Activated CD8-positive, alpha-beta T cell treated with anti-CD3 and anti-CD28 coated beads for 36 hours (primary cell): ENCODE measurements at regions of chr3 and their contacts with region 1.

Region 1: GRCh38 chr3:4517643-4518311 is 24.6 kb downstream of the ITPR1 start:
- DNase-seq: no peak
- ATAC-seq: no peak
- H3K4me3 Mint-ChIP-seq: no peak overlapping the region
- H3K27ac Mint-ChIP-seq: peak overlapping the region; percentile 55
- H3K4me1 Mint-ChIP-seq: peaks cover 50% of the 10 kb centered on the region
- H3K27me3 Mint-ChIP-seq: no peaks in the 10 kb centered on the region
- CTCF ChIP-seq: no peak

Region 2: DNA sequence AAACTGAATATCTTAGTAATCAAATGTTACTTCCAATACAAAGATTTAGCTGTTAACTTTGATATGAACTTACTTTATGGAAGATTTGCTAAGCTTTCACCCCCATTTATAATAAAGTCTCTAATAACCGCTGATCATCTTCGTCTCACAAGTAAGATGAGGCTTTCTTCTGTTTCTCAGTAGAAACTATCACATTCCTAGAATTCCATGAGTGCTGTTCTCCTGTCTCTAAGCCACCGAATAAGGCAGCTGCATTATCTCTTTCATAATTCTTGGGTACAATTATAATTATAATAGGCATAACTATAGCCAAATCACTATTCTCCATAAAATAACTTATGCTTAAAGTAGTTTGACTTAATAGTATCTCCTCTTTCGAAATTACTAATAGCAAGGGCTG is 232.9 kb before region 1 on chr3:
- CTCF ChIA-PET with region 1: no interaction called
- POLR2A ChIA-PET with region 1: no interaction called
- intact Hi-C with region 1: no loop called
- DNase-seq: no peak
- ATAC-seq: no peak
- H3K4me3 Mint-ChIP-seq: no peak overlapping the region
- H3K27ac Mint-ChIP-seq: no peak overlapping the region
- H3K4me1 Mint-ChIP-seq: no peaks in the 10 kb centered on the region
- H3K27me3 Mint-ChIP-seq: no peaks in the 10 kb centered on the region
- CTCF ChIP-seq: no peak

Region 3: GRCh38 chr3:4387210-4388204 is 130.3 kb before region 1 on chr3:
- CTCF ChIA-PET with region 1: no interaction called
- POLR2A ChIA-PET with region 1: no interaction called
- intact Hi-C with region 1: no loop called
- DNase-seq: no peak
- ATAC-seq: peak; percentile 87
- H3K4me3 Mint-ChIP-seq: no peak overlapping the region
- H3K27ac Mint-ChIP-seq: peak overlapping the region; percentile 66
- H3K4me1 Mint-ChIP-seq: peaks cover 35% of the 10 kb centered on the region
- H3K27me3 Mint-ChIP-seq: no peaks in the 10 kb centered on the region
- CTCF ChIP-seq: no peak

Region 4: GRCh38 chr3:4474683-4475490 is 42.9 kb before region 1 on chr3:
- CTCF ChIA-PET with region 1: no interaction called
- POLR2A ChIA-PET with region 1: no interaction called
- intact Hi-C with region 1: no loop called
- DNase-seq: peak; percentile 70
- ATAC-seq: peak; percentile 88
- H3K4me3 Mint-ChIP-seq: peak overlapping the region; percentile 7
- H3K27ac Mint-ChIP-seq: peak overlapping the region; percentile 44
- H3K4me1 Mint-ChIP-seq: peaks cover 10% of the 10 kb centered on the region
- H3K27me3 Mint-ChIP-seq: peaks cover 28% of the 10 kb centered on the region
- CTCF ChIP-seq: no peak

Region 5: DNA sequence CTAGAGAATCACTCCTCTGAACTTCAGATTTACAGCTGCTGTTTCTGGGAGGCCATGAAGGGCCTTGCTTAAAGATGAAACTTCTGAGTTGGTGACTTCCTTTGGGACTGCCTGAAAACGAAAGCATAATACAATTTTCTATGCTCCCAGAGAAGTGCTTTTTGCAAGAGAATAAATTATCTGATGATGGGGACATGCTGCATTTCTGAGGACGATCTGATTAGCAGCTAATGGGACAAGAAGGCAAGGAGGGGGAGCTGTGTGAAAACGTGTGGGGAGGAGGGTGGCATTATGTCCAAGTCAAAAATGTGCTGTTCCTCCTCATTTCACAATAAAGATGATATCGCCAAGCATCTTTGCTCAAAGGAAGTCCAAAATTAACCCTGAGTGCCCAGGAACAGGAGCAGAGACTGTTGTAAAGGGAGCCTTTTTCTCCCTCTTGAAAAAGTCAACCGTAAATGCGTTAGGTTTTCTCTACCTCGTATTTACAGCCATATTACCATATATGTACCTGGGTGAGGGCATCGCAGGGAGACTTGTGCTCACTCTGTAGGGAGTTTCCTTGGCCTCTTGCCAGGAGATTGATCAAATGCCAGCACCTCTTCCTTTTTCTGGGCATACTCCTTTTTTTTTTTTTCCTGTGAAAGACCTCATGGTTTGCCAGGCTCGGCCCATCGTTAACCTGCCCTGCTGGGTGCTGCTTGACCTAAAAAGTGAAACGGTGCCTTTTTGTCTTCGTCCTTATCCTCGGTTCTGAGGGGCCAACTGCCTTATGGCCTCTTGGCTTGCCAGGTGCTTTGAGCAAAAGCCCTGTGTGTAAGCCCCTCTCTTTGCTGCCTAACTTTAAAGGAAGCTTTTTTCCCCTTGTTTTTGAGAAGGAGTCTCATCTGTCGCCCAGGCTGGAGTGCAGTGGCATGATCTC is 13.2 kb before region 1 on chr3:
- CTCF ChIA-PET with region 1: interaction called, 21 read pairs
- POLR2A ChIA-PET with region 1: interaction called, 9 read pairs
- intact Hi-C with region 1: no loop called
- DNase-seq: peak; percentile 45
- ATAC-seq: peak; percentile 66
- H3K4me3 Mint-ChIP-seq: peak overlapping the region; percentile 77
- H3K27ac Mint-ChIP-seq: peak overlapping the region; percentile 92
- H3K4me1 Mint-ChIP-seq: peaks cover 60% of the 10 kb centered on the region
- H3K27me3 Mint-ChIP-seq: no peaks in the 10 kb centered on the region
- CTCF ChIP-seq: no peak

Region 6: DNA sequence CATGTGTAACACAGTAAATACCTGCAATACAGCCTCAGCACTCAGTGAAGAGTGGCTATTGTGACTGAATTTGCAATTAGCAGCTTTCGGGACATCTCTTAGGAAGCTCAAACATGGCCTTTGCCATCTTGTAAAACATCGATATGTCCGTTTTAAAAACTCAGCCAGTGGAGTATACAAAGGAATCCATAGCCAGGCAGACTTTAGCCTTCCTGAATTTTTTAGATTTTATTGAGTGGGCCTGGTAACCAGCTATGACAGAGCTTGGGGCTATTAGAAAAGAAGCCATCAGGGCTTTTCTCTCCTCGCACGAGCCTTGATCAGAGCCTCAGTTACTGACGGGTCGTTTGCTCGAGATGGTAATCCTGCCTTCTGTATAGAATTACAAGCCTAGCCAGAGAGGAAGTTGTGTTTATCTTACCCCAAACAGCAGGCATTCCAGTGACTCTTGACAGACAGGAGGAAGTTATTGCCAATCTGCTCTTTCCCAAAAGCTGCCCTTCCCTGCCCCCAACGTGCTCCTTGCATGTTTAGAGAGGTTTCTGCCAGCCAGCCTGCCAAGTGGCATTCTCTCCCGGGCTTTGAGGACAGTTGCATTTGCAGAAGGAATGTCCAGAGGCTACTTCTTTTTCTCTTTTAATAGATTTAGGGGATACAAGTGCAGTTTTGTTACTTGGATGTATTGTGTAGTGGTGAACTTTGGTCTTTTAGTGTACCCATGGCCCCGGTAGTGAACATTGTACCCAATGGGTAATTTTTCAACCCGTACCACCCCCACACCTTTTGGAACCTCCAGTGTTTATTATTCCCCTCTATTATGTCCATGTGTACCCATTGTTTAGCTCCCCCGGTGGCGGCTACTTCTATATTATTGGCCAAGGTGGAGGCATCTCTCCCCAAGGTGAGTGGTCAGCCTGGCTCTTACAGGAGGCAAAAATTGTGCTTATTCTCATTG is 16.0 kb after region 1 on chr3:
- CTCF ChIA-PET with region 1: interaction called, 16 read pairs
- POLR2A ChIA-PET with region 1: no interaction called
- intact Hi-C with region 1: no loop called
- DNase-seq: no peak
- ATAC-seq: no peak
- H3K4me3 Mint-ChIP-seq: no peak overlapping the region
- H3K27ac Mint-ChIP-seq: no peak overlapping the region
- H3K4me1 Mint-ChIP-seq: peaks cover 31% of the 10 kb centered on the region
- H3K27me3 Mint-ChIP-seq: no peaks in the 10 kb centered on the region
- CTCF ChIP-seq: no peak

Region 7: GRCh38 chr3:4546346-4547178 is 28.8 kb after region 1 on chr3:
- CTCF ChIA-PET with region 1: interaction called, 10 read pairs
- POLR2A ChIA-PET with region 1: interaction called, 6 read pairs
- intact Hi-C with region 1: no loop called
- DNase-seq: no peak
- ATAC-seq: peak; percentile 55
- H3K4me3 Mint-ChIP-seq: no peak overlapping the region
- H3K27ac Mint-ChIP-seq: no peak overlapping the region
- H3K4me1 Mint-ChIP-seq: peaks cover 24% of the 10 kb centered on the region
- H3K27me3 Mint-ChIP-seq: no peaks in the 10 kb centered on the region
- CTCF ChIP-seq: no peak